Right cardiac atrium (tissue), 5 donors: ENCODE measurements at regions of chr2 and their contacts with region 1.

Region 1: DNA sequence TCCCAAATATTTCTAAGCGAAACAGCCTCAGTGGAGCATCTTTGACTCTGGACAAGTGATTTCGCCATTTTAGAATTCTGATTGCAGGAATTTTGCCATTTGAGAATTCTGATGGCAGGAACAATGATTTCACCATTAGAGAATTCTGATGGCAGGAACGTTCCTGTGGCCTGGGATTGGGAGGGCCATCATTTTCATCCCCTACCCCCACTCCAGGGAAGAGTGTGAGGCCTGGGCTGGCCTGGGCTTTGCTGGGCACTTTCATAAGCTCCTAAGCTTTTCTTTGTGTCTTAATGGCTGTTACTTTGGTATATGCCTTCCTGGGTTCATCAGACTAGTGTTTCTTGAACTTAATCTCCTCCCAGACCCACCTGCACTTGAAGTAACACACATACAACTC is 129.3 kb upstream of the EPAS1 start:
- DNase-seq: no peak
- ATAC-seq: no peak
- H3K4me3 ChIP-seq: no peak overlapping the region
- H3K27ac ChIP-seq: no peak overlapping the region
- H3K4me1 ChIP-seq: peaks cover 22% of the 10 kb centered on the region
- H3K27me3 ChIP-seq: no peaks in the 10 kb centered on the region

Region 2: GRCh38 chr2:46125798-46126197 is 42.1 kb before region 1 on chr2:
- intact Hi-C with region 1: loop called in 1 of 4 experiments (anchors 2 kb)
- DNase-seq: no peak
- ATAC-seq: no peak
- H3K4me3 ChIP-seq: no peak overlapping the region
- H3K27ac ChIP-seq: no peak overlapping the region
- H3K4me1 ChIP-seq: peaks cover 8% of the 10 kb centered on the region
- H3K27me3 ChIP-seq: no peaks in the 10 kb centered on the region

Region 3: DNA sequence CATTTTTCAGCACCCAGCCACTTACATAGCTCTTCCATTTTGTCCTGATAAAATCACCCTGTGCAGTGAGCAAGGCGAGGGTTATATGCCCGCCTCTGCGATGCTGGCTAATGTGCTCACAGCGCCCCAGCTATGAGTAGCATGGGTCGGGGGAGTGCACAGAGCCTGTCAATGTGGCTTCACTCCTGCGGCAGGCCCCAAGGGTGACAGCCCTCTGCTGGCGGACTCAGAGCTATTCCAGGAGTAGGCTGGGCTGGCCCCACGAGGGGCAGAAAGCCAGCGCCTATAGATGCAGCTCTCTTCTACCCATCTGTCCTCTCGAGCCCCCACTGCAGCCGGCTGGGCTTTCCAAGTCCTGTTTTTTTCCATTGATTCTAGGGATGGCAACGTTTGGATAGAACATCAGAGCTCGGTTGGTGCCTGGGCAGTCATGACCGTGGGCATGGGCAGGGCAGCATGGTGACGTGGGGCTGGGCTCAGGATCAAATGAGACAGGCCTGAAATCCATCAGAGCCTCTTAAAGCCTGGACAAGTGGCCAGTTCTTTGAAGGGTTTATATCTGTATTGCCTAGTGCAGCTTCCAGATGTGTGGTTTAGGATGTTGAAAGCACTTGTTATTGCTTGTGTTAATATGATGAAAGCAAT is 613.0 kb after region 1 on chr2:
- intact Hi-C with region 1: no loop called
- DNase-seq: peak in 2 of 3 donors; percentile 68 to 69
- ATAC-seq: peak; percentile 62 to 76
- H3K4me3 ChIP-seq: no peak overlapping the region
- H3K27ac ChIP-seq: peak overlapping the region; percentile 83
- H3K4me1 ChIP-seq: peaks cover 25% of the 10 kb centered on the region
- H3K27me3 ChIP-seq: no peaks in the 10 kb centered on the region